Heart left ventricle (tissue), 16 donors: ENCODE measurements at regions of chr2 and their contacts with region 1.

Region 1: DNA sequence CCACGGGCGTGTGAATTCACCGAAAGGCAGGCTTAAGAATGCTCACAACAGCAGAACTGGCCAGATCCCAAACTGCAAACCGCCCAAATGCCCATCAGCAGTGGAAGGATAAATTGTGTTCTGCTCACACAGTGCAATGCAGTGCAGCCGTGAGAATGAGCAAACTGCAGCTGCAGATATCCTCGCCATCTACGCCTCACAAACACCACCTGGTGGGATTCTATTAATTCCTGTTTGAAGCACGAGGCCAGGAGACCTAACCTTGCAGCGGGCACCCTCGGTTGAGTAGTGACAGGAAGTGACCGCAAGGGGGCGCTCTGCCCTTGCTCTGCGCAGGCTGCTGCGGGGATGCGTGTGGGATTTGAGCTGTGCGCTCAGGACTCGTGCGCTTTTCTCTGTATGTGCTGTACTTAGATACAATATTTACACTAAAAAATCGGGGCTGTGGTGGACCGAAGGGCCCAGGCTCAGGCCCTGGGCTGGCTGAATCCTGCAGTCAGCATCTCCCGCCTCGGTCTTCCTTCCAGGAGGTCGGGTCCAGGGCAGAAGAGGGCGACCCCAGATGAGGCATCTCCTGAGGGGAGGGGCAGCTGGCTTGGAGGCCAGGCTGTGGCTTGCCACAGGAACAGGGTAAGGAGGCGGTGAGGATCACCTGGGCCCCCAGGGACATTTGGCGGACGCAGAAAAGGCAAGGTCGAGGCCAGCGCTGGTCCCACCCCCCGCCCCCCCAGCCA is 19.8 kb upstream of the PDIA6 start:
- DNase-seq: peak; percentile 73 to 89 (median 79)
- ATAC-seq: peak; percentile 69 to 85 (median 84)
- H3K4me3 ChIP-seq: no peak overlapping the region
- H3K27ac ChIP-seq: no peak overlapping the region
- H3K4me1 ChIP-seq: peaks cover 0 to 14% (median 1%) of the 10 kb centered on the region in 12 donors
- H3K27me3 ChIP-seq: peaks cover 6 to 47% (median 13%) of the 10 kb centered on the region in 9 donors
- CTCF ChIP-seq: peak; percentile 92 to 99 (median 96)
- POLR2A ChIP-seq: no peak

Region 2: GRCh38 chr2:10762651-10763465 is 69.5 kb before region 1 on chr2:
- intact Hi-C with region 1: no loop called
- DNase-seq: peak in 4 of 5 donors; percentile 30 to 82 (median 40)
- ATAC-seq: peak; percentile 58 to 90 (median 82)
- H3K4me3 ChIP-seq: peak overlapping the region in 5 of 12 donors; percentile 4 to 19 (median 18)
- H3K27ac ChIP-seq: no peak overlapping the region
- H3K4me1 ChIP-seq: peaks cover 0 to 11% (median 0%) of the 10 kb centered on the region in 12 donors
- H3K27me3 ChIP-seq: no peaks in the 10 kb centered on the region
- CTCF ChIP-seq: no peak
- POLR2A ChIP-seq: no peak

Region 3: GRCh38 chr2:10900216-10901109 is 68.1 kb after region 1 on chr2:
- intact Hi-C with region 1: loop called in 3 of 10 experiments (anchors 2 to 5 kb)
- DNase-seq: no peak
- ATAC-seq: peak in 1 of 4 donors; percentile 18
- H3K4me3 ChIP-seq: no peak overlapping the region
- H3K27ac ChIP-seq: no peak overlapping the region
- H3K4me1 ChIP-seq: no peaks in the 10 kb centered on the region
- H3K27me3 ChIP-seq: no peaks in the 10 kb centered on the region
- CTCF ChIP-seq: peak in 3 of 12 donors; percentile 9 to 25 (median 9)
- POLR2A ChIP-seq: no peak

Region 4: DNA sequence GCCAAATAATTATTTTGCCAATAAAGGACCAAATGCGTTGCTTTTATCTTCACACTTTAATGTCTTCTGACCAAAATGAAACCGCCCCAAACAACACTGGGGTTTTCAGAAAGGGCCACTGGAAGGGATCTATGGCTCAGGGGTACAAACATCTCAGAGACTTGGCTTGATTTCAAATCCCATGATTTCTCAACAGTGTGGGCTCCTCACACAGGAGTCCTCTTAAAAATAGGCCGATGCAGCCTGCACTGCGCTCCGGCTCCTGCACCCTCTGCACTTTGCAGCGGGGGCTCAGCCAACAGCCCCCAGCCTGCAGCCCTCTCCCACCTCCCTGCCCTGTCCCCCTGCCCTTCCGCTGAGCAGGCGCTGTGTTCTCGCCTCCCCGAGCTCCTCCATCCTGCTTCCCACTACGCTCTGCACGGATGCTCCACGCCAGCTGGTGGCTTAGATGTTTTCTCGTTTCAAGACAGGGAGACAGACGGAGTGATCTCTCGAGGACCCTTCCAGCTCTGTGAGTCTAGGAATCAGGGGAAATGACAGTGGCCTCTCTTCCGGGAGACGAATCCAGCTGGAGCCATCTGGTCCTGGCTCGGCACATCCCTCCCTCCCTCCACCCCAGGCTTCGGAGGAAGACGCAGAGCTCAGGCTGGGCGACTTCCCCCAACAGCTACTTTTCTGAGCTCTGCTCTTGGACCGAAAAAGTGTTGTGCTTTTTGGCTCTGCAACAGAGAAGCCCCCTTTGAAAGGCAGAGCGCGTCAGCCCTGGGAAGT is 150.7 kb after region 1 on chr2:
- intact Hi-C with region 1: loop called in 1 of 10 experiments (anchors 10 kb)
- DNase-seq: peak; percentile 77 to 87 (median 82)
- ATAC-seq: peak; percentile 72 to 85 (median 78)
- H3K4me3 ChIP-seq: peak overlapping the region in 6 of 12 donors; percentile 1 to 24 (median 14)
- H3K27ac ChIP-seq: peak overlapping the region; percentile 40 to 82 (median 72)
- H3K4me1 ChIP-seq: peaks cover 0 to 23% (median 4%) of the 10 kb centered on the region in 12 donors
- H3K27me3 ChIP-seq: peaks cover 0 to 9% (median 0%) of the 10 kb centered on the region in 9 donors
- CTCF ChIP-seq: no peak
- POLR2A ChIP-seq: no peak

Region 5: DNA sequence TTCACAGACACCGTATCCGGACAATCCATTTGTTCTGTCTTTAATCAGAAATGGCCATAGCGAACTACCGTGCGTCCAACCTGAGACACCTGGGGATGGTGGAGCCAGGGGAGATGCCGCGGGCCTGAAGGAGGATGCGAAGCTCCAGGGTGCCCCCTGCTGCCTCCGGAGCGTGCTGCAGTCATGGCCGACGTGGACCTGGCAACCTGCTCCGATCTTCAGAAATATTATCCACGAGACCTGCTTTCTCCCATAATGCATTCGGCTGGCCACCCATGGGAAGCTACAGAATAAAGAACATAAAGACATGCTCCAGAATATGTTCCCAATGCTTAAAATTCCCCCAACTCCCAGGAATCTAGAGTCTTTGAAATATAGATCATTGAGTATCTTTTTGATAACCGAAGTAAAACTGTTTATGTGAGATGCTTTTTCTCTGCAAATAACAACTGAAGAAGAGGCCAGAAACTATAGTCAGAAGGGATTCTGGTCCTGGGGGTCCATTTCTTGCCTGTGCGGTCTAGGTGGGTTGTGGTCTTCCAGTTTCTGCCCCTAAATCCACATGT is 292.2 kb after region 1 on chr2:
- intact Hi-C with region 1: loop called (anchors 1 to 2 kb)
- DNase-seq: peak in 2 of 5 donors; percentile 47 to 76
- ATAC-seq: peak in 3 of 4 donors; percentile 59 to 73 (median 61)
- H3K4me3 ChIP-seq: no peak overlapping the region
- H3K27ac ChIP-seq: no peak overlapping the region
- H3K4me1 ChIP-seq: peaks cover 0 to 10% (median 2%) of the 10 kb centered on the region in 12 donors
- H3K27me3 ChIP-seq: peaks cover 0 to 11% (median 0%) of the 10 kb centered on the region in 9 donors
- CTCF ChIP-seq: peak; percentile 51 to 78 (median 72)
- POLR2A ChIP-seq: no peak

Region 6: GRCh38 chr2:11446733-11447248 is 614.4 kb after region 1 on chr2:
- intact Hi-C with region 1: loop called in 2 of 10 experiments (anchors 10 kb)
- DNase-seq: peak in 4 of 5 donors; percentile 36 to 44 (median 40)
- ATAC-seq: peak; percentile 47 to 84 (median 77)
- H3K4me3 ChIP-seq: no peak overlapping the region
- H3K27ac ChIP-seq: no peak overlapping the region
- H3K4me1 ChIP-seq: no peaks in the 10 kb centered on the region
- H3K27me3 ChIP-seq: no peaks in the 10 kb centered on the region
- CTCF ChIP-seq: peak; percentile 68 to 89 (median 82)
- POLR2A ChIP-seq: no peak